ENCODE measurements at regions of chr11 and their contacts with region 1.

Region 1: DNA sequence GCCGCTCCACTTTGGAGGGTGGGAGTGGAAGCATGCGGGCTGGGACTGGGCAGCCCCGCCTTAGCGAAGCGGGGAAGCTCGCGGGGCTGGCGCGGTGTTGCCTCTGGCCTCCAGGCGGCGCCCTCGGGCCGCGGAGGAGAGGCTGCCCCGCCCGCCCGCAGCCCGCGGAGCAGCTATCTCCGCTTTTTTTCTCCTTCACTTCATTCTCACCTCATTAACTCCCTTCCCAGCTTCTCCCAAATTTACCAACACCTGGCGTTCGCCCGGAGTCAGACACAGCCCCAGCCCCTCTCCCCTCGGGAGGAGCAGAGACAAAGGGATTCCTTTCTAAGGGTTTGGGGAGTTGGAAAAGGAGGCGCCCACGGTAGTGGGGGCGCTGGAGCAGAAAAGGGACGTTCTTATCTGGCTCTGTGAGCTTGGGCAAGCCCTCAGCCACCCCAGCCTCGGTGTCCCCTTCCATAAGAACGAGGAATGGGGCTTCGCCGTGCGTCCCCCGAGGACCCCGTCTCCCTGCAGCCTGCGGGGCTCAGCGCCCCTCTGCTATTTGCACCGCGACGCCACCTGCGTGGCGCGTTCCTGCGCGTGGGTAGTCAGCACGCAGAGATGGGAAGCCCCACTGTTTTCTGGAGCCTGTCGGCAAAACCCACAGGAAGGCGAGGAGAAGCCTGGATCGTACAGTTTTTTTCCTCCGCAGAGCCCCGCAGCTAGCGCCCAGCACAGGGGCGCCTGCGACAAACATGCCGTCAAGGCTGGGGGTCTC is 1.5 kb upstream of the WNT11 start:
- DNase-seq: peak; percentile 95

Region 2: GRCh38 chr11:76318744-76319384 is 111.0 kb after region 1 on chr11:
- intact Hi-C with region 1: loop called (anchors 5 kb)
- DNase-seq: peak; percentile 92

Region 3: GRCh38 chr11:76512851-76513653 is 305.2 kb after region 1 on chr11:
- intact Hi-C with region 1: loop called in 1 of 2 experiments (anchors 10 kb)
- DNase-seq: no peak

Region 4: GRCh38 chr11:76860539-76861475 is 653.0 kb after region 1 on chr11 and contains the start of gene ACER3:
- intact Hi-C with region 1: no loop called
- DNase-seq: peak; percentile 97
- total RNA-seq, gene ACER3: 22.0 to 27.0 TPM